Panc1 (cell line): ENCODE measurements at regions of chr1 and their contacts with region 1.

Region 1: DNA sequence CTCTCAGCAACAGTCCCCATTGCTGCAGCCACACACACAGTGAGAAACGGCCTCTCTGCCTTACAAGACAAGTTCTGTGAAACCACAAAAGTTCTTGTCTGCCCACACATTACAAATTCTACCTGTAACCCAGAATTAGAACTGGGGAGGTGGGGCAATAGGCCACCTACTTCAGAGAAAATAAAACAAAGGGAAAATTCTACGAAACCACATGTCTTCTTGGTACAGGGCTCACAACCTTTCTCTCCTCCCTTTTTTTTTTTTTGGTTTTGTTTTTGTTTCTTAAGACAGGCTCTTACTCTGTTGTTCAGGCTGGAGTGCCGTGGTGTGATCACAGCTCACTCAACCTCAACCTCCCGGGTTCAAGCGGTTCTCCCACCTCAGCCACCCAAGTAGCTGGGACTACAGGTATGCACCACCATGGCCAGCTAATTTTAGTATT is 30.2 kb downstream of the LPAR3 start:
- DNase-seq: no peak
- ATAC-seq: no peak
- H3K4me3 ChIP-seq: no peak overlapping the region
- H3K27ac ChIP-seq: no peak overlapping the region
- H3K4me1 ChIP-seq: no peaks in the 10 kb centered on the region
- H3K27me3 ChIP-seq: no peaks in the 10 kb centered on the region
- CTCF ChIP-seq: no peak

Region 2: DNA sequence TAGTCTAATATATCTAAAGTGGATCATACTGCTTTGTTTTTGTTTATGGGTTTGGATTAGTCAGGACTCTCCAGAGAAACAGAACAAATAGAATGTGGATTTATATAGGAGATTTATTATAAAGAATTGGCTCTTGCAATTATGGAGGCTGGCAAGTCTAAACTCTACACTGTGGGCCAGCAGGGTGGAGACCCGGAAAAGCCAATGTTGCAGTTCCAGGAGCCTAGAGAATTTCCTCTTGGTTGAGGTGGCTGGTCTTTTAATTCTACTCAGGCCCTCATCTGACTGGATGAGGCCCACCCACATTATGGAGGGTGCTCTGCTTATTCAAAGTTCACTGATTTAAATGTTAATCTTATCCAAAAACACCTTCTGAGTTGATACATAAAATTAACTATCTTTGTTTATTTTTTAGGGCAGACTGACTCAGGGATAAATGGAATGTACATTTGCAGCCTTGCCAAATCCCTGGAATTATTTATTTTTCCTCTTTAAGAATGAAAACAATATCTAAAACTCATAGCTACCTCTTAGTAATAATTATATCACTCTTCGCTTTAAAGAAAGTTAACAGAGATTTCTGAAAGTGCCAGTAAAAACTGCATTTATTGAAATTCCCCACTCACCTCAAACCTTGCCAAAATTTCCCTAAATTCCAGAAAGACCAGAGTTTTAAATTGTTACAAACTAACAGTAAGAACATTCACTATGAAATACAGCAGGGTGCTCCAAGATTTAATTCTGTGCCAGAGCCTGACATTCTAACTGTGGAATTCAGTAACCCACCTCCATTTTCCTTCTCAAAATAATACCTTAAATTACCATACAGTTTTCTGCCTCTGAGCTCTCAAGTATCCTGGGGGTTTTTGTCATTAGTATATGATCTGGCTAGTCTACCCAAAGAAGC is 136.0 kb before region 1 on chr1:
- CTCF ChIA-PET with region 1: no interaction called
- POLR2A ChIA-PET with region 1: no interaction called
- in situ Hi-C with region 1: no loop called
- intact Hi-C with region 1: no loop called
- DNase-seq: no peak
- ATAC-seq: no peak
- H3K4me3 ChIP-seq: no peak overlapping the region
- H3K27ac ChIP-seq: no peak overlapping the region
- H3K4me1 ChIP-seq: no peaks in the 10 kb centered on the region
- H3K27me3 ChIP-seq: peaks cover 2% of the 10 kb centered on the region; the same call in 1 of the 2 replicates
- CTCF ChIP-seq: no peak

Region 3: DNA sequence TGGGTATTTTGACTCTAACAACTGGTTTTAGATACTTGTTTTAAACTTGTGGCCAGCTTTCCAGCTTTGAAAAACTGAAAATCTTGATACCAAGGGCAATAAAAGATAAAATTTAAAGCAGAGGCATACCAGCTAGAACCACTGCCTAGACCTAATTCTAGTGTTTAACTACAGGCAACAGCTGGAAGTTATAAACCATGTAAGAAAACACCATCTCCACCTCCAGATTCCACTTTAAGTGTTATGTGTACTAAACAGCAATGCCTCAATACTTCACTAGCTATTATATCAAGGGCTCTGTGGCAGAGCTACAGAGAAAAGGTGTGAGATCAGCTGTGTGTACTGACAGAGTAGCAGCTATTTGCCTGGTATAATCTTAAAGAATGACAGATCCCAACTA is 39.3 kb before region 1 on chr1:
- CTCF ChIA-PET with region 1: no interaction called
- POLR2A ChIA-PET with region 1: interaction called, 18 read pairs
- in situ Hi-C with region 1: no loop called
- intact Hi-C with region 1: no loop called
- DNase-seq: no peak
- ATAC-seq: no peak
- H3K4me3 ChIP-seq: no peak overlapping the region
- H3K27ac ChIP-seq: no peak overlapping the region
- H3K4me1 ChIP-seq: no peaks in the 10 kb centered on the region
- H3K27me3 ChIP-seq: peaks cover 5% of the 10 kb centered on the region; the same call in 1 of the 2 replicates
- CTCF ChIP-seq: no peak

Region 4: GRCh38 chr1:84892705-84893618 is 30.1 kb after region 1 on chr1 and contains the start of gene LPAR3:
- CTCF ChIA-PET with region 1: no interaction called
- POLR2A ChIA-PET with region 1: no interaction called
- in situ Hi-C with region 1: no loop called
- intact Hi-C with region 1: no loop called
- DNase-seq: no peak
- ATAC-seq: peak; percentile 92
- H3K4me3 ChIP-seq: peak within 1 kb of the TSS; percentile 40 to 67
- H3K27ac ChIP-seq: no peak within 1 kb of the TSS
- H3K4me1 ChIP-seq: peaks cover 6% of the 10 kb centered on the region
- H3K27me3 ChIP-seq: peaks cover 25% of the 10 kb centered on the region
- CTCF ChIP-seq: peak; percentile 63
- total RNA-seq, gene LPAR3: 6.3 TPM